HepG2 (cell line): ENCODE measurements at regions of chr12 and their contacts with region 1.

Region 1: GRCh38 chr12:77734214-77734883 is 96.3 kb upstream of the NAV3 start:
- DNase-seq: no peak
- ATAC-seq: no peak
- H3K4me3 ChIP-seq: no peak overlapping the region
- H3K27ac ChIP-seq: no peak overlapping the region
- H3K4me1 ChIP-seq: no peaks in the 10 kb centered on the region
- H3K27me3 ChIP-seq: no peaks in the 10 kb centered on the region
- CTCF ChIP-seq: no peak
- EP300 ChIP-seq: no peak
- POLR2A ChIP-seq: no peak
- RAD21 ChIP-seq: no peak

Region 2: DNA sequence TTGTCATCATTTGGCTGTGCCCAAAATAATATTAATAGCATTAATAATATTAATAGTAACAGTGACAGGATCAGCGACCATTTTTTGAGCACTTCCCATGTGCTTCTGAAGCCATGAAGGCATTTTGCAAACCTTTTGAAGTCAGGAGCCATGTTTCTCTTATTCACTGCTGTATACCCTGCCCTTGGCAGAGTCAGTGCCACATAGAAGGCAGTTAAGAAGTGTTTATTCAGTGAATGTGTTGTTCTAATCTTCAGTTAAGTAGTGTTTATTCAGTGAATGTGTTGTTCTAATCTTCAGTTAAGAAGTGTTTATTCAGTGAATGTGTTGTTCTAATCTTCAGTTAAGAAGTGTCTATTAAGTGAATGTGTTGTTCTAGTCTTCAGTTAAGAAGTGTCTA is 223.4 kb before region 1 on chr12:
- CTCF ChIA-PET with region 1: no interaction called
- POLR2A ChIA-PET with region 1: no interaction called
- in situ Hi-C with region 1: no loop called
- intact Hi-C with region 1: no loop called
- DNase-seq: no peak
- ATAC-seq: no peak
- H3K4me3 ChIP-seq: no peak overlapping the region
- H3K27ac ChIP-seq: no peak overlapping the region
- H3K4me1 ChIP-seq: no peaks in the 10 kb centered on the region
- H3K27me3 ChIP-seq: no peaks in the 10 kb centered on the region
- CTCF ChIP-seq: no peak
- EP300 ChIP-seq: no peak
- POLR2A ChIP-seq: no peak
- RAD21 ChIP-seq: no peak

Region 3: DNA sequence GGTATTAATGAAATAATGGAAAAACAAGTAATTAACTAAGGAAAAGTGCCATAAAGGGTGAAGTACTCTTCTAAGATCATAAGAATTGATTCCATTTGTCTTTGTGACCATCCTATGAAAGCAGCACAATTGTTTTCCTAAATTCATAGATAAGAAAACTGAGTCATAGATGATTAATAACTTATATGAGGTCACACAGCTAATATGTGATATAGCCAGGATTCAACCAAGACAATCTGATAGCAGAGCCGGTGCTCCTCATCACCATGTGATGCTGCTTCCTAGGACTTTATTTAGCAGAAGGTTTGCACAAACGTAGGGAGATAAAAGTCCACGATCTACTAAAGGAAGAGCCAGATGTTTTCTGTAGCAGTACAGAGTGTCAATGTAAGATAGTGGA is 948.7 kb after region 1 on chr12:
- CTCF ChIA-PET with region 1: no interaction called
- POLR2A ChIA-PET with region 1: no interaction called
- in situ Hi-C with region 1: no loop called
- intact Hi-C with region 1: loop called (anchors 5 kb)
- DNase-seq: no peak
- ATAC-seq: no peak
- H3K4me3 ChIP-seq: no peak overlapping the region
- H3K27ac ChIP-seq: no peak overlapping the region
- H3K4me1 ChIP-seq: no peaks in the 10 kb centered on the region
- H3K27me3 ChIP-seq: no peaks in the 10 kb centered on the region
- CTCF ChIP-seq: no peak
- EP300 ChIP-seq: no peak
- POLR2A ChIP-seq: no peak
- RAD21 ChIP-seq: no peak